GM10248 (cell line): ENCODE measurements at regions of chr14 and their contacts with region 1.

Region 1: DNA sequence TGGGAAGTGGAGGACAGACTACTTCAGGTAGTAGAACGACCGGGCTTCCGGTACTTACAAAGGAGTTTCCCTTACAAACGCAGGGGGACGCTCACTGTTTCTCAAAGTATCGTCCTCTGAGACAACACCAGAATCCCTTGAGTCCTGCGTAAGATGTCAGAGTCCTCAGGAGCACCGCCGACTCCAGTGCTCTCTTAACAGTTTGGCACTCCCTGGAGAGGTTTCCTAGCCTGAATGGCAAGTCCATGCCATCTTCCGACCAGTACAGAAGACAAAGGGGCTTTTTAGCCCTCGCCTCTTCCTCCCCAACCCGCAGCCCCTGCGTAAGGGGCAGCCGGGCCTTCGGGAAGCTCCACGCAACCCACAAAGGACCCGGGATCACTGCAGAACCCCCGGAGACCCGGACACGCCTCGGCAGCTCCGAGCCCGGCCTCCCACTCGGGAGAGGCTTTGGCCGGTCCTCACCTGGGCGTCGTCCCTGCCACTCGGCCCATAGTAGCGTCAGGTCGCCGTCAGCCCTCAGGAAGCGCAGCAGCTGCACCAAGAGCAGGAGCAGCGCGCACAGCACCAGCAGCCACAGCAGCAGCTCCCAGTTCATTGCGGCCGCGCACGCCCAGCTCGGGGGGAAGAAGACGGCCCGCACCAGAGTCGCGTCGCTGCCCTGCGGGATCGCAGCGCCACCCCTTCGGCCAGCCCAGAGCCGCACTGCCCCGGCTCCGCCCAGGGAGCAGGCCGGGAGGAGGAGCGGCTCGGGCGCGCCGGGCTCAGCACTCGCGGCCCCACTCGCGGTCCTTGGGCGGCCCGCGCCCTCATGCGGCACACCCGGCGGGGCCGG is at the start of gene DHRS7:
- DNase-seq: peak; percentile 88
- CTCF ChIP-seq: peak; percentile 80

Region 2: DNA sequence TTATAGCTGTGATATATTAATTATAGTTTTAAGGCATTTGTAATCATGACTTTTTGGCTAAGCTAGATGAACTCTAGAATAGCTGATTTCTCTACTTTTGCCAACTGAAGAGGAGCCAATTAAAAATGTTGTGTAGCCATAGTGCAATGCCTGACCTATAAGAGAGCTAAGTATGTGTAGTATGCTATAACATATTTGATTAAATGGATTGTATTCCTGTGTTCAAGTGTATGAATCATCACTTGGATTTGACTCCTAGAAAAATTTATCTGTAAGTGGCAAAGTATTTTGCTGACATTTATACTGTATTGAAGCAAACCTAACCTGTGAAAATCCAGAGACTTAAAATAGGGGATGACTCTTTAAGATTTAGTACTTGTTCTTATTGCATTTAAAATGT is 39.0 kb before region 1 on chr14:
- CTCF ChIA-PET with region 1: interaction called, 10 read pairs
- POLR2A ChIA-PET with region 1: no interaction called
- DNase-seq: no peak
- CTCF ChIP-seq: no peak

Region 3: DNA sequence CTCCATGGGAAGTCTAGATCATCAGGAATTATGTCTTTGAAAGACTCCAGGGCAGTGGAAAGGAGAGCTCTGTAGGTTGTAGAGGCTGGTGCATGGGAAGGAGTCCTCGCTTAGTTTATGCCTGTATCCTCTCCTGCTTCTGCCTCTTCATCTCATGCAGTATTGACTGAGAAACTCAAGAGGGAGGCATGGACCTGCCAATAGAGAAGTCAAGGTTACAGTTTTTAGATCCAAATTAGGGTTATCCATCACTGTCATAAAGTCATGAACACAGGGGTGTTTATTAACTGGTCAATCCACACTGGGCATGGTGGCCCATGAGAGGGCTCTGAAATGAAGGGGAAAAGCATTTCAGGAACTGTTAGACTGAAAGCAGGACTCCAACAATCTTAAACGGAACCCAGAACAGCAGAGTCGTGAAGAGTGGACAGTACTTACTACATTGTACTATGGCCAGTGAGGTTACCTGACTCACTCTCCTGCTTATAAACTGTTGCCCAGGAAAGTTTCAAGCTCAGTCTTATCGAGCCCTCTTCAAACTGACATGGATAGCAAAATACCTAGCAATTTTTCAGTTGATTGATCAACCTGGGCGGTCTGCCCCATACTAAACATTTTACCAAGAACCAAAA is 30.4 kb after region 1 on chr14:
- CTCF ChIA-PET with region 1: no interaction called
- POLR2A ChIA-PET with region 1: no interaction called
- DNase-seq: no peak
- CTCF ChIP-seq: peak; percentile 56